Posterior vena cava (tissue), 2 donors: ENCODE measurements at regions of chr12 and their contacts with region 1.

Region 1: GRCh38 chr12:133120385-133121191 is 9.5 kb downstream of the ZNF891 start:
- DNase-seq: no peak

Region 2: DNA sequence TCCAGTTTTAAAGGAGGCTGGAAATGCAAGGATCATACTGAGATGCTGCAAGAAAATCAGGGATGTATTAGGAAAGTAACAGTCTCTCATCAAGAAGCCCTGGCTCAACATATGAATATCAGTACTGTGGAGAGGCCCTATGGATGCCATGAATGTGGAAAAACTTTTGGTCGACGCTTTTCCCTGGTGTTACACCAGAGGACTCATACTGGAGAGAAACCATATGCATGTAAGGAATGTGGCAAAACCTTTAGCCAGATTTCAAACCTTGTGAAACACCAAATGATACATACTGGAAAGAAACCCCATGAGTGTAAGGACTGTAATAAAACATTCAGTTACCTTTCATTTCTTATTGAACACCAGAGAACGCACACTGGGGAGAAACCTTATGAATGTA is 15.0 kb before region 1 on chr12:
- intact Hi-C with region 1: loop called in 1 of 2 experiments (anchors 1 kb)
- DNase-seq: no peak

Region 3: DNA sequence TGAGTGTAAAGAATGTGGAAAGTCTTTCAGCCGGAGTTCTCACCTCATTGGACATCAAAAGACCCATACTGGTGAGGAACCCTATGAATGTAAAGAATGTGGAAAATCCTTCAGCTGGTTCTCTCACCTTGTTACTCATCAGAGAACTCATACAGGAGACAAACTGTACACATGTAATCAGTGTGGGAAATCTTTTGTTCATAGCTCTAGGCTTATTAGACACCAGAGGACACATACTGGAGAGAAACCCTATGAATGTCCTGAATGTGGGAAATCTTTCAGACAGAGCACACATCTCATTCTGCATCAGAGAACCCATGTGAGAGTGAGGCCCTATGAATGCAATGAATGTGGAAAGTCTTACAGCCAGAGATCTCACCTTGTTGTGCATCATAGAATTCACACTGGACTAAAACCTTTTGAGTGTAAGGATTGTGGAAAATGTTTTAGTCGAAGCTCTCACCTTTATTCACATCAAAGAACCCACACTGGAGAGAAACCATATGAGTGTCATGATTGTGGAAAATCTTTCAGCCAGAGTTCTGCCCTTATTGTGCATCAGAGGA is 35.6 kb after region 1 on chr12:
- intact Hi-C with region 1: loop called in 1 of 2 experiments (anchors 1 kb)
- DNase-seq: no peak